Colonic mucosa (tissue), 4 donors: ENCODE measurements at regions of chr14 and their contacts with region 1.

Region 1: GRCh38 chr14:58072288-58073071 is 79.5 kb downstream of the ARMH4 start:
- DNase-seq: peak; percentile 47
- H3K4me3 ChIP-seq: no peak overlapping the region
- H3K27ac ChIP-seq: no peak overlapping the region
- H3K4me1 ChIP-seq: no peaks in the 10 kb centered on the region
- H3K27me3 ChIP-seq: no peaks in the 10 kb centered on the region
- CTCF ChIP-seq: peak; percentile 58

Region 2: GRCh38 chr14:57486767-57487379 is 585.6 kb before region 1 on chr14:
- intact Hi-C with region 1: loop called (anchors 2 kb)
- DNase-seq: no peak
- H3K4me3 ChIP-seq: no peak overlapping the region
- H3K27ac ChIP-seq: no peak overlapping the region
- H3K4me1 ChIP-seq: no peaks in the 10 kb centered on the region
- H3K27me3 ChIP-seq: no peaks in the 10 kb centered on the region
- CTCF ChIP-seq: peak; percentile 26

Region 3: GRCh38 chr14:57692671-57693070 is 379.8 kb before region 1 on chr14:
- intact Hi-C with region 1: loop called (anchors 5 kb)
- DNase-seq: no peak
- H3K4me3 ChIP-seq: no peak overlapping the region
- H3K27ac ChIP-seq: no peak overlapping the region
- H3K4me1 ChIP-seq: no peaks in the 10 kb centered on the region
- H3K27me3 ChIP-seq: no peaks in the 10 kb centered on the region
- CTCF ChIP-seq: peak; percentile 19